Activated naive CD4-positive, alpha-beta T cell treated with anti-CD3 and anti-CD28 coated beads for 36 hours (primary cell): ENCODE measurements at regions of chr5 and their contacts with region 1.

Region 1: GRCh38 chr5:149828161-149828884 is 98.2 kb downstream of the PPARGC1B start:
- DNase-seq: peak; percentile 93
- H3K4me3 Mint-ChIP-seq: no peak overlapping the region
- H3K27ac Mint-ChIP-seq: no peak overlapping the region
- H3K4me1 Mint-ChIP-seq: peaks cover 7% of the 10 kb centered on the region
- H3K27me3 Mint-ChIP-seq: no peaks in the 10 kb centered on the region

Region 2: DNA sequence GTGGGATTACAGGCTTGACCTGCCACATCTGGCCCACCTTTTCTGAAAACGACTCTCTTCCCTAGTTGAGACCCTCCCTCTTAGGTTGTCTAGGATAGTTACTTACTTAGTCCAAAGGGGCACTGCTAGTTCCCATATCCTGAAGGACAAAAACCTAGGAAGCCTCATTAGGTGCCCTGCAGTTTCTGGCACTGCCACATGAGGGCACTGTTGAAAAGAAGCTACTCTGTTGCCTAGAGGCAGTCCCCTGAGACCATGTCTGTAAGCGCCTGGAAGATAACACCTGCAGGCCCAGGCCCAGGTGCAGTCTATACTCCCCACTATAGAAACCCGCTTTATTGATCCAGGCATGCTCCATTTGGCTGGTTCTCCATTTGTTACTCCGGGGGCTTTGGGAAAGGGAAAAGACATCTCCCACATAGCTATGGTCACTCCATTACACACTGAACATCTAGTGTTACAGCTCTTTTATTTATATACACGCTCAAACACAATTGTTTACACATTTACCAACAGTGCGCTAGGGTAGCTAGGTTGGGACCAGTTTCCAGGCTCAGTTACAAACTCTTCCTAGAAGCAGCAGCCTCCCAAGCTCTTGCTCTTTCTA is 171.6 kb before region 1 on chr5:
- CTCF ChIA-PET with region 1: interaction called, 7 read pairs
- intact Hi-C with region 1: loop called (anchors 1 kb)
- DNase-seq: peak; percentile 67
- H3K4me3 Mint-ChIP-seq: no peak overlapping the region
- H3K27ac Mint-ChIP-seq: no peak overlapping the region
- H3K4me1 Mint-ChIP-seq: no peaks in the 10 kb centered on the region
- H3K27me3 Mint-ChIP-seq: peaks cover 5% of the 10 kb centered on the region

Region 3: DNA sequence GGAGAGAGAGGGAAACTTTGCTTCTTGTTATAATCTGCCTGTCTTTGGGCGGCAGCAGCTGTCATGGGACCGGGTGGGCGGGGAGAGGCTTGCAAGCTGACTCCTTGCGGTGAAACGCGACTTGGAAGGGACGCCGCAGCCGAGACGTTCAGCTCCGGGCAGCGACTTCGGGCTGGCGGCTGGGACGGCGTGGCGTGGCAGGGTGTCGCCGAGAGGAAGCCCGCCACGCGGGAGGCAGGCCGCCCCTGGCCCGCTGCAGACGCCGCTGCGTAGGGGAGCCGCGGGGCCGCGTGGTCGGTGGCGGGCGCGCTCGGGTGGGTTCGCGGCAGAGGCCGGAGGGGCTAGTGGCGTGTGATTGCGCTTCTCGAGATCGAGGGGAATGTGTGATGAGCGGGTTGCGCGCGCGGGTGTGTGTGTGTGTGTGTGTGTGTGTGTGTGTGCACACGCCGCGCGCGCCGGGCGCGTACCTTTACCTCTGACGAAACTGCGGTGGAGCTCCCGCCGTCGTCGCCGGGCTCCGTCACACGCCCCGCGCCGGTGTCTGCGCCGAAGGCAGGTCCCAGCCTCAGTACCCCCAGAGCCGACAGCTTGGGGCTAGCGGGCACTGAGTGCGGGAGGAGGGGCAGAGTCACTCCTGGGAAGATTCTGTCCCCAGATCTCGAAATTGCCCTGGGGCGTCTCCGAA is 96.5 kb before region 1 on chr5:
- CTCF ChIA-PET with region 1: interaction called, 3 read pairs
- intact Hi-C with region 1: loop called (anchors 5 kb)
- DNase-seq: peak; percentile 90
- H3K4me3 Mint-ChIP-seq: peak overlapping the region; percentile 81
- H3K27ac Mint-ChIP-seq: peak overlapping the region; percentile 56
- H3K4me1 Mint-ChIP-seq: peaks cover 4% of the 10 kb centered on the region
- H3K27me3 Mint-ChIP-seq: no peaks in the 10 kb centered on the region

Region 4: GRCh38 chr5:149852641-149853330 is 24.5 kb after region 1 on chr5:
- CTCF ChIA-PET with region 1: interaction called, 25 read pairs
- intact Hi-C with region 1: loop called (anchors 1 kb)
- DNase-seq: peak; percentile 70
- H3K4me3 Mint-ChIP-seq: no peak overlapping the region
- H3K27ac Mint-ChIP-seq: no peak overlapping the region
- H3K4me1 Mint-ChIP-seq: no peaks in the 10 kb centered on the region
- H3K27me3 Mint-ChIP-seq: no peaks in the 10 kb centered on the region